Dendritic cell treated with granulocyte-macrophage colony-stimulating factor and Interleukin-4, amounts not matched to agents 40 ng/mL and 50 ng/mL, for 4 days (primary cell): ENCODE measurements at regions of chr3 and their contacts with region 1.

Region 1: GRCh38 chr3:71652781-71653413 is 69.4 kb upstream of the FOXP1 start:
- H3K4me3 Mint-ChIP-seq: no peak overlapping the region
- H3K27ac Mint-ChIP-seq: no peak overlapping the region
- H3K4me1 Mint-ChIP-seq: peaks cover 13% of the 10 kb centered on the region
- H3K27me3 Mint-ChIP-seq: no peaks in the 10 kb centered on the region

Region 2: DNA sequence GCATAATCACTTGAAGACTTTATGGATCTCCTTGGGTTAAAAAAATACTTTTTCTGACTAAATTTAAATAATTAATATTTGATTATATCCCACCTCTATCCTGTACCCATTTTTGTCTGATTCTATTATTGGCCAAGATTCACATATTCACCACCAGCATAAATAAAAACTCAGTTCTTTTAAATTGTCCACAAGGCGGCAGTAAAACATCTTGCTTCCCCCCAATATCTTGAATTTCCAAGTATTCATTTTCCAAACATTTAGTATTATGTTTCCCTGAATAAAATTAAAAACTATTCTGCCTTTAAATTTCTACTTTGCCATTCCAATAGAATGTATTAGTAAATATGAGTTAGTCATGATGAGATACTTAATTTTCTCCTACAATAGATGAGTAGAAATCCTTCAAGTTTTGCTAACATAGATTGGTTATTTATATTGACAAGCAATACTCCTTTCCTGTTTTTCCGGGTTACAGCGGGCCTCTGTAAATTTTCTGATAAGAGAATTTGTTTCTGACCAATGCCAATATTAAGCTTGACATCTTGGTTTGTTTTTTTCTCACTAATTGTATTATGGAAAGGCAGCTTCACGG is 1121.7 kb before region 1 on chr3:
- intact Hi-C with region 1: loop called (anchors 5 kb)
- H3K4me3 Mint-ChIP-seq: no peak overlapping the region
- H3K27ac Mint-ChIP-seq: no peak overlapping the region
- H3K4me1 Mint-ChIP-seq: no peaks in the 10 kb centered on the region
- H3K27me3 Mint-ChIP-seq: peaks cover 2% of the 10 kb centered on the region

Region 3: DNA sequence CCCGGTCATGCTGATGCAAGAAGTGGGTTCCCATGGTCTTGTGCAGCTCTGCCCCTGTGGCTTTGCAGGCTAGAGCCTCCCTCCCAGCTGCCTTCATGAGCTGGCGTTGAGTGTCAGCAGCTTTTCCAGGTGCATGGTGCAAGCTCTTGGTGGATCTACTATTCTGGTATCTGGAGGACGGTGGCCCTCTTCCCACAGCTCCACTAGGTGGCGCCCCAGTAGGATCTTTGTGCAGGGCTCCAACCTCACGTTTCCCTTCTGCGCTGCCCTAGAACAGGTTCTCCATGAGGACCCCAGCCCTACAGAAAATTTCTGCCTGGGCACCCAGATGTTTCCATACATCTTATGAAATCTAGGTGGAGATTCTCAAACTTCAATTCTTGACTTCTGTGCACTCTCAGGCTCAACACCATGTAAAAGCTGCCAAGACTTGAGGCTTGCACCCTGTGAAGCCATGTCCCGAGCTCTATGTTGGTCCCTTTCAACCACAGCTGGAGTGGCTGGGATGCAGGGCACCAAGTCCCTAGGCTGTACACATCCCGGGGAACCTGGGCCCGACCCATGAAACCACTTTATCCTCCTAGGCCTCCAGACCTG is 1102.1 kb before region 1 on chr3:
- intact Hi-C with region 1: loop called (anchors 1 kb)
- H3K4me3 Mint-ChIP-seq: no peak overlapping the region
- H3K27ac Mint-ChIP-seq: no peak overlapping the region
- H3K4me1 Mint-ChIP-seq: no peaks in the 10 kb centered on the region
- H3K27me3 Mint-ChIP-seq: no peaks in the 10 kb centered on the region

Region 4: GRCh38 chr3:71006810-71007785 is 645.8 kb before region 1 on chr3:
- intact Hi-C with region 1: loop called (anchors 2 kb)
- H3K4me3 Mint-ChIP-seq: no peak overlapping the region
- H3K27ac Mint-ChIP-seq: no peak overlapping the region
- H3K4me1 Mint-ChIP-seq: peaks cover 6% of the 10 kb centered on the region
- H3K27me3 Mint-ChIP-seq: no peaks in the 10 kb centered on the region

Region 5: GRCh38 chr3:71690341-71690841 is 37.5 kb after region 1 on chr3:
- intact Hi-C with region 1: no loop called
- H3K4me3 Mint-ChIP-seq: no peak overlapping the region
- H3K27ac Mint-ChIP-seq: no peak overlapping the region
- H3K4me1 Mint-ChIP-seq: no peaks in the 10 kb centered on the region
- H3K27me3 Mint-ChIP-seq: no peaks in the 10 kb centered on the region